Naive thymus-derived CD4-positive, alpha-beta T cell (primary cell): ENCODE measurements at regions of chrX and their contacts with region 1.

Region 1: DNA sequence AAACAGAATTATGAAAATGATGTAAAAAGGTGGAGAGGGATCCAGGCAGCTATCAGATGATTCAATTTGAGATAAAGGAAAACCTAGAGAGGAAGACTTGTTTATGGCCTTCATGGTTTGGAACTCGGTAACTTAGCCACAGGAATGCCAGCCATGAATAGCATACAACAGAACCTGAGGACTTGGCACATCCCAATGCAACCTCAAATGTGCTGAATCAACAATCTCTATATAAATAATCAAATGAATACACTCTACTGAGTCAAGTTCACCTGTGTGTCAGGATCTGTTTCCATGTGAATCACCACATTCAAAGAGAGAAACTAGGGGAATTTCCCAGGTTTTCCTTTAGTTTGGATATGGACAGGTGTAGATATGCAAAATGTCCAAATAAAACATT is 86.9 kb downstream of the MBNL3 start:
- DNase-seq: no peak
- ATAC-seq: no peak
- H3K4me3 ChIP-seq: no peak overlapping the region
- H3K4me3 Mint-ChIP-seq: no peak overlapping the region
- H3K27ac ChIP-seq: no peak overlapping the region
- H3K27ac Mint-ChIP-seq: no peak overlapping the region
- H3K4me1 ChIP-seq: no peaks in the 10 kb centered on the region
- H3K4me1 Mint-ChIP-seq: peaks cover 0 to 4% (median 0%) of the 10 kb centered on the region in 7 donors
- H3K27me3 ChIP-seq: no peaks in the 10 kb centered on the region
- H3K27me3 Mint-ChIP-seq: no peaks in the 10 kb centered on the region

Region 2: DNA sequence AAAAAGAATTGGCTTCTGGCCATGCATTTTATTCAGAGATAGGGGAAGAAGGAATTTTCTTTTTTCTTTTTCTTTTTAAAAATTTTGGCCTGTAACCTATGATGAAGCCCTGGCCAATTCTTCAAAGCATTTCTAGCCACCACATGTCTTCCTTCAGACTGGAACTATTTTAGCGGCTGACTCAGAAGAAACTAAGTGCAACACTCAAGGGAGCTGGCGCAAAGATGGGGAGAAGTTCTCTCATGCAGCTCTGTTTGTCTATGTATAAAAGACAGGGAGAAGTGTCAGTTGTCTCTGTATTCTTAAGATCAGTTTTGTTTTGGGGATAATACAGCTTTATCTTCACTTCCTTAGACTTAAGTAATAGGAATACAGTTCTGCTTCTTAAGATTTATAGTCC is 40.8 kb after region 1 on chrX:
- CTCF ChIA-PET with region 1: no interaction called
- POLR2A ChIA-PET with region 1: no interaction called
- intact Hi-C with region 1: no loop called
- DNase-seq: no peak
- ATAC-seq: no peak
- H3K4me3 ChIP-seq: no peak overlapping the region
- H3K4me3 Mint-ChIP-seq: no peak overlapping the region
- H3K27ac ChIP-seq: no peak overlapping the region
- H3K27ac Mint-ChIP-seq: no peak overlapping the region
- H3K4me1 ChIP-seq: no peaks in the 10 kb centered on the region
- H3K4me1 Mint-ChIP-seq: peaks cover 0 to 5% (median 0%) of the 10 kb centered on the region in 7 donors
- H3K27me3 ChIP-seq: no peaks in the 10 kb centered on the region
- H3K27me3 Mint-ChIP-seq: no peaks in the 10 kb centered on the region

Region 3: GRCh38 chrX:132480581-132481203 is 78.8 kb after region 1 on chrX:
- CTCF ChIA-PET with region 1: no interaction called
- POLR2A ChIA-PET with region 1: no interaction called
- intact Hi-C with region 1: loop called in 1 of 2 experiments (anchors 5 kb)
- DNase-seq: peak in 8 of 9 donors; percentile 21 to 57 (median 43)
- ATAC-seq: peak; percentile 88
- H3K4me3 ChIP-seq: peak overlapping the region; percentile 58
- H3K4me3 Mint-ChIP-seq: peak overlapping the region; percentile 73 to 96 (median 88)
- H3K27ac ChIP-seq: peak overlapping the region; percentile 69
- H3K27ac Mint-ChIP-seq: peak overlapping the region; percentile 80 to 94 (median 92)
- H3K4me1 ChIP-seq: peaks cover 13 to 23% of the 10 kb centered on the region in 2 donors
- H3K4me1 Mint-ChIP-seq: peaks cover 8 to 69% (median 54%) of the 10 kb centered on the region in 7 donors
- H3K27me3 ChIP-seq: no peaks in the 10 kb centered on the region
- H3K27me3 Mint-ChIP-seq: no peaks in the 10 kb centered on the region

Region 4: DNA sequence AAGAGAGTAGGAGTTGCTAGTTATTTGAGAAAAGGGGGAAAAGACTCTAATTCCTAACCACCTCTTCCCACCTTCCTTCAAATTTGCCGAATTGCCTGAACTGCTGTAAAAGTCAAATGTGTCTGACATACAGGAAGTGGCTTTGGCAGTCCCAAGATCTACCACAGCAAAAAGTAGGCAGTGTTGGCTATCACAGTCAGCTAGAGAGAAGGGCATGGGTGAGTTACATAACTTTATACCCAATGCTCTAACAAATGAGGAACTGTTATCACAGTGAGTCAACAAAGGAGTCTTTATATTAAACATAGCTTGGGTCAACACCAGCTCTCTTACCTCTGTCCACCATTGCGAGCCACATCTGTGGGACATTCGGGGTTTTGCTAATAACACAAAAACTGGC is 89.3 kb after region 1 on chrX:
- CTCF ChIA-PET with region 1: no interaction called
- POLR2A ChIA-PET with region 1: no interaction called
- intact Hi-C with region 1: no loop called
- DNase-seq: peak in 7 of 9 donors; percentile 25 to 56 (median 40)
- ATAC-seq: peak; percentile 69
- H3K4me3 ChIP-seq: peak overlapping the region; percentile 74
- H3K4me3 Mint-ChIP-seq: peak overlapping the region; percentile 89 to 98 (median 93)
- H3K27ac ChIP-seq: no peak overlapping the region
- H3K27ac Mint-ChIP-seq: peak overlapping the region in 8 of 9 donors; percentile 11 to 82 (median 34)
- H3K4me1 ChIP-seq: peaks cover 4 to 12% of the 10 kb centered on the region in 2 donors
- H3K4me1 Mint-ChIP-seq: peaks cover 10 to 37% (median 26%) of the 10 kb centered on the region in 7 donors
- H3K27me3 ChIP-seq: no peaks in the 10 kb centered on the region
- H3K27me3 Mint-ChIP-seq: peaks cover 0 to 18% (median 0%) of the 10 kb centered on the region in 5 donors

Region 5: DNA sequence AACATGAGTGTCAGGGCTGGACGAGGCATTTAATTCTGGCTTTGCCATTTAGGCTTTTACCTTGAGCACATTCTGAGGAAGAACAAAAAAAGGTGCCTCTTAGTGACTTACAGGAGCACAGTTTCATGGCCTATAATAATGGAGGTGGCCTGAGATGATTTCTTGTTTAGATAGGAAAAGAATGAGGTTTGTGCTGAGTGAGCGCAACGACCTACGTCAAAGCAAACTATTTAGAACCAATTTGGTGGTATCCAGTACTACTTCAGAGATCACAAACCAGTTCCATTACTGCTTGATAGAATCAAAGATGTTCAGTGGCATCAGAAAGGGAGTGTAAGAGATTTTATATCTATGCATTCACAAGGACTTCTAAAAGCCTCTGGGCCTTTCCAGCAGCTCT is 181.4 kb after region 1 on chrX:
- CTCF ChIA-PET with region 1: no interaction called
- POLR2A ChIA-PET with region 1: no interaction called
- intact Hi-C with region 1: no loop called
- DNase-seq: no peak
- ATAC-seq: no peak
- H3K4me3 ChIP-seq: no peak overlapping the region
- H3K4me3 Mint-ChIP-seq: no peak overlapping the region
- H3K27ac ChIP-seq: no peak overlapping the region
- H3K27ac Mint-ChIP-seq: no peak overlapping the region
- H3K4me1 ChIP-seq: no peaks in the 10 kb centered on the region
- H3K4me1 Mint-ChIP-seq: no peaks in the 10 kb centered on the region
- H3K27me3 ChIP-seq: no peaks in the 10 kb centered on the region
- H3K27me3 Mint-ChIP-seq: peaks cover 0 to 3% (median 0%) of the 10 kb centered on the region in 5 donors